ENCODE measurements at regions of chr2 and their contacts with region 1.

Region 1: DNA sequence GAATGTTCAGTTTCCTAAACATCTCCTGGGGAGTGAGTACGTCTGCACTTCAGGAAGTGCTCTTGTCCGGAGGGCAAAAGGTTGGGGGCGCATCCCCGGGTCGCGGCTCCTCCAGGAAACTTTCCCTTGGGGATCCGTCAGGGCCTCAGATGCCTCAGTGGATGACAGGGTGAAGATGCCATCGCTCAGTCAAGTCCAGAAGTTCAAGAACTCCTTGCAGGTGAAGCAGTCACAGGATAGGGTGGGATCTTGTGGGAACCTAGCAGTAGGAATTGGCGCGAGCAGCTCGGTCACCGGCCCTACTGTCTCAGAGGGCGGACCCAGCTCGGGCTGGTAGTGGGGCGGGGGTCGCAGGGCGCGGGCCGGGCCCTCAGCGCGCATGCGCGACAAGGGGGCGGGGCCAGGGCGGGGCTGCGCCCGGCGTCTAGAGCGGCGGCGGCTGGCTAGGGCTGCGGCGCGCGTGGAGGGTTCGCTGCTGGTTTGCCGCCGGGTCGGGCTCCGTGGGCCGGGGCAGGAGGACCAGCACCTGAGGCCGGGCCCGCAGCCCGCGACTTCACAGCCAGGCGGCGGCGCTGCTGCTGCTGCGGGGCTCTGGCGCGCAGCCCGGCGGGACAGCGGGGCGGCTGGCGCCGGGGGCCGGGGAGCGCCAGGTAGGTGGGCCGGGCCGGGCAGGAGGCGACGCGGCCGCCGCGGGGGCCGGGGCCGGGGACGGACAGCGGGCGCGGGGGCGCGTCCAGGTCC is at the start of gene INPP4A:
- DNase-seq: peak in 1 of 2 donors; percentile 76
- H3K4me3 ChIP-seq: peak within 1 kb of the TSS; percentile 61 to 97
- H3K27ac ChIP-seq: peak within 1 kb of the TSS; percentile 53 to 74
- H3K4me1 ChIP-seq: peaks cover 2 to 8% of the 10 kb centered on the region in 2 donors
- H3K27me3 ChIP-seq: no peaks in the 10 kb centered on the region
- CTCF ChIP-seq: peak in 1 of 3 experiments; percentile 33
- total RNA-seq, gene INPP4A: 52.8 TPM

Region 2: DNA sequence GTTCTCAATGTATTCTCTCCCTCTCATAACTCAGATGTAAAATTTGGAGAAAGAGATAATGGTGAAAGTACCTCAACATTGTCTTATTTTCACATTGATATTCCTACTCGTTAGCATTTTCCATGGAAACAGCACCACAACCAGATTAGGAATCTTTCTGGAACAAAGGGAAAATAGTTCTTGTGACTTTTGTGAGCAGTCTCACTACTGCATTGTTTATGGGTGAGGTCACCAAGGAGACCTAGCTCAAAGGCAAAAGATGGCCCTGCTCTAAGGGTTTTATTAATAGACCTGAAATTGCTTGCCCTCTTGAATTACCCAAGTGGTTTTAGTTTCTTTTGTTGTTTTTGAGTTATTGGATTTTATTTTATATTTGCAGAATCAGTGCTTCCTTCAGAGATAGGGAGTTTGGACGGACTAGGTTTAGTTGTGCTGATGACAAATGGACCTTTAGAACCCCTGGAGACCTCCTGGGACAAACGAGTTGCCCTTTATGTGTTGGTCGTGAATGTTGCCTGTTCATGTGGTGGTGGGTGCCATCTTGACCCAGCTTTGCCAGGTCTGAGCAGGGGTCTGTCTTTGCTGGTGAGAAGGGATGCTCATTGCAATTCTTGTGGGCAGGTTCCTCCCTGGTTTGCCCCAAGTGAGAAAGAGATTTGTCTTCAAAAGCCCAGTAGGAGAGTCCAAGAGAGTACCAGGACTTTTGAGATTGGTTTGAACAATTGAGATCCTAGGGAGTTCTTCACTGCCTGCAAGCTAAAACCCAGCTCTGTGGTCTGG is 58.1 kb after region 1 on chr2:
- intact Hi-C with region 1: loop called (anchors 5 kb)
- DNase-seq: peak in 1 of 2 donors; percentile 52
- H3K4me3 ChIP-seq: no peak overlapping the region
- H3K27ac ChIP-seq: peak overlapping the region; percentile 2 to 59
- H3K4me1 ChIP-seq: peaks cover 0 to 40% of the 10 kb centered on the region in 2 donors
- H3K27me3 ChIP-seq: no peaks in the 10 kb centered on the region
- CTCF ChIP-seq: no peak

Region 3: DNA sequence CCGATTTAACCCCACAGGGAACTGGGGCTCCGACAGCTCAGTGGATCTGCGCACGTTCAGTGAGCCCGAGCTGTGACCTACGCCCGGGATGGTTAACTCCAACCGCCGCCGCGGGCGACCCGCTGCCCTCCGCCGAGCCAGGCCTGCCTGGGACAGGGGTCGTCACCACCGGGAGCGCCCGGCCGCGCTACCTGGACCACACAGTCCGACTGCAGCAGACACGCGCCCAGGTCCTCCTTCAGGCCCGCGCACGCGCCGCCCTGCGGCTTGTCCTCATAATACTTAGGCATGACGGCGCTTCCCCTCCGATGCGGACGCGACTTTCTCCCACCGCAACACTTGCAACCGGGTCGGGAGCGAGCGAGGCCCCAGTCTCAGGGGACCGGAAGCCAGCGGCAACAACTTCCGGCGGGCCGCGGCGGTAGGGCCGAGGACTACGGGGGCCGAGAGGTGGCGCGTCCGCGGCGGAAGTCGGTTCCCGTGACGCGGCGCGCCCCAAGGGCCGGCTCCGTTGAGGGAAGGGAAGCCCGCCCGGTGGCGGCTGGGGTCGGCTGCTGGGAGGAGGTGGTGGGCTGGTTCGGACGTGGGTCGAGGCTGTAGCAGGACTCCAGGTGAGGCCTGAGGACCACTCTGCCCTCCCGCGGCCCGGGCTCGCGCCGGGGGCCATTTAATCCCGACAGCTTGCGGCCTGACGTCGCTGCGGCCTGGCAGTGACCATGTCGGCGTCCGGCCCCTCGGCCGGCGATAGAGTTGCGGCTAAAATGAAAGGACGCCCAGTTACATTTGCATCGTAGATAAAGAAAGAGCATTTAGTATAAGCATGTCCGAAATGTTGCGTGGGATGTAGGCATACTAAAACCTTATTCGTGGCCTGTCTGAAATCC is 163.8 kb after region 1 on chr2 and contains the starts of genes COA5 and UNC50:
- intact Hi-C with region 1: loop called (anchors 2 kb)
- DNase-seq: peak; percentile 58 to 93
- H3K4me3 ChIP-seq: peak within 1 kb of the TSS; percentile 77 to 98
- H3K27ac ChIP-seq: peak within 1 kb of the TSS; percentile 96
- H3K4me1 ChIP-seq: peaks cover 25 to 34% of the 10 kb centered on the region in 2 donors
- H3K27me3 ChIP-seq: no peaks in the 10 kb centered on the region
- CTCF ChIP-seq: peak in 1 of 3 experiments; percentile 10
- total RNA-seq, gene COA5: 86.3 TPM
- total RNA-seq, gene UNC50: 34.4 TPM

Measured in ascending aorta (tissue), 2 donors.